B cell (primary cell): ENCODE measurements at regions of chr15 and their contacts with region 1.

Region 1: DNA sequence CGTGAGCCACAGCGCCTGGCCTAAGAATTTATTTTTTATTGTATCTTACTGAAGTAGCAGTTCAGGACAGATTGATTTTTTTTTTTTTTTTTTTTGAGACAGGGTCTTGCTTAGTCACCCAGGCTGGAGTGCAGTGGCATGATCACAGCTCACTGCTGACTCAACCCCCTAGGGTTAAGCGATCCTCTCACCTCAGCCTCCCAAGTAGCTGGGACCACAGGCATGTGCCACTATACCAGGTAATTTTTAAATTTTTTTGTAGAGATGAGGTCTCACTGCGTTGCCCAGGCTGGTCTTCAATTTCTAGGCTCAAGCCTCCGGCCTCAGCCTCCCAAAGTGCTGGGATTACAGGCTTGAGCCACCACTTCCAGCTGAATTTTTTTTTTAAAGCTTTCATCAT is 99.8 kb upstream of the HERC1 start:
- DNase-seq: no peak
- ATAC-seq: no peak
- H3K4me3 ChIP-seq: no peak overlapping the region
- H3K4me3 Mint-ChIP-seq: no peak overlapping the region
- H3K27ac ChIP-seq: no peak overlapping the region
- H3K27ac Mint-ChIP-seq: no peak overlapping the region
- H3K4me1 ChIP-seq: peaks cover 1 to 3% of the 10 kb centered on the region in 2 donors
- H3K4me1 Mint-ChIP-seq: peaks cover 5% of the 10 kb centered on the region
- H3K27me3 ChIP-seq: no peaks in the 10 kb centered on the region
- H3K27me3 Mint-ChIP-seq: no peaks in the 10 kb centered on the region
- CTCF ChIP-seq: no peak

Region 2: GRCh38 chr15:63860155-63860554 is 73.4 kb before region 1 on chr15:
- CTCF ChIA-PET with region 1: no interaction called
- POLR2A ChIA-PET with region 1: no interaction called
- intact Hi-C with region 1: no loop called
- DNase-seq: peak; percentile 73
- ATAC-seq: peak; percentile 95
- H3K4me3 ChIP-seq: peak overlapping the region in 1 of 5 experiments; percentile 24
- H3K4me3 Mint-ChIP-seq: peak overlapping the region; percentile 52
- H3K27ac ChIP-seq: peak overlapping the region; percentile 71 to 76
- H3K27ac Mint-ChIP-seq: peak overlapping the region; percentile 89
- H3K4me1 ChIP-seq: peaks cover 31 to 32% of the 10 kb centered on the region in 2 donors
- H3K4me1 Mint-ChIP-seq: peaks cover 31% of the 10 kb centered on the region
- H3K27me3 ChIP-seq: no peaks in the 10 kb centered on the region
- H3K27me3 Mint-ChIP-seq: no peaks in the 10 kb centered on the region
- CTCF ChIP-seq: no peak

Region 3: GRCh38 chr15:63945007-63945788 is 11.7 kb after region 1 on chr15:
- CTCF ChIA-PET with region 1: interaction called, 23 read pairs
- POLR2A ChIA-PET with region 1: no interaction called
- intact Hi-C with region 1: no loop called
- DNase-seq: peak; percentile 69
- ATAC-seq: peak; percentile 78
- H3K4me3 ChIP-seq: no peak overlapping the region
- H3K4me3 Mint-ChIP-seq: no peak overlapping the region
- H3K27ac ChIP-seq: no peak overlapping the region
- H3K27ac Mint-ChIP-seq: peak overlapping the region; percentile 23
- H3K4me1 ChIP-seq: peaks cover 13 to 26% of the 10 kb centered on the region in 2 donors
- H3K4me1 Mint-ChIP-seq: peaks cover 25% of the 10 kb centered on the region
- H3K27me3 ChIP-seq: peaks cover 0 to 2% (median 0%) of the 10 kb centered on the region in 4 experiments
- H3K27me3 Mint-ChIP-seq: no peaks in the 10 kb centered on the region
- CTCF ChIP-seq: peak; percentile 98

Region 4: DNA sequence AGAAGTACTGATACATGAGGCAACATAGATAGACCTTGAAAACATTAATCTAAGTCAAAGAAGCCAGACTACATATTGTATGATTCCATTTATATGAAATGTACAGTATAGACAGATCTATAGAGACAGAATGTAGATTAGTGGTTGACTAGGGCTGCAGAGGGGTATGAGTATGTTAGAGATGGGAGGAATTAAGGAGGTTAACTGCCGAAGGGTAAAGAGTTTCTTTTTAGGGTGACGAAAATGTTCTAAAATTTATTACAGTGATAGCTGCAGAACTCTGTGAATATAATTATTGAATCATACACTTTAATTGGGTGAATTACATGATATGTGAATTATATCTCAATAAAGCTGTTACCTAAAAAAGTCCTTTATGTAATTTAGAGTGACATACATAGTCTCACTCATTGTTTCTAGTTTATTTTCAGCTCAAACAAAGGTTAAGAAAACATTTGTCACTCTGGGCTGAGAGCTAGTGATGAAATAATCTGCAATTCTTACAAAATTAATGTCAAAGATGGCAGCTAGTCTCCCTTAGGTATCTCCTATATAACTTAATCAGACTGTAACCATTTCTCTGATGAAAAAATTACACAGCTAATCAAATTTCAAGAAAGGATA is 1797.1 kb after region 1 on chr15:
- CTCF ChIA-PET with region 1: no interaction called
- POLR2A ChIA-PET with region 1: no interaction called
- intact Hi-C with region 1: no loop called
- DNase-seq: no peak
- ATAC-seq: no peak
- H3K4me3 ChIP-seq: no peak overlapping the region
- H3K4me3 Mint-ChIP-seq: no peak overlapping the region
- H3K27ac ChIP-seq: no peak overlapping the region
- H3K27ac Mint-ChIP-seq: no peak overlapping the region
- H3K4me1 ChIP-seq: no peaks in the 10 kb centered on the region
- H3K4me1 Mint-ChIP-seq: peaks cover 1% of the 10 kb centered on the region
- H3K27me3 ChIP-seq: no peaks in the 10 kb centered on the region
- H3K27me3 Mint-ChIP-seq: no peaks in the 10 kb centered on the region
- CTCF ChIP-seq: no peak